Head of caudate nucleus (tissue), 42 donors: ENCODE measurements at regions of chr16 and their contacts with region 1.

Region 1: DNA sequence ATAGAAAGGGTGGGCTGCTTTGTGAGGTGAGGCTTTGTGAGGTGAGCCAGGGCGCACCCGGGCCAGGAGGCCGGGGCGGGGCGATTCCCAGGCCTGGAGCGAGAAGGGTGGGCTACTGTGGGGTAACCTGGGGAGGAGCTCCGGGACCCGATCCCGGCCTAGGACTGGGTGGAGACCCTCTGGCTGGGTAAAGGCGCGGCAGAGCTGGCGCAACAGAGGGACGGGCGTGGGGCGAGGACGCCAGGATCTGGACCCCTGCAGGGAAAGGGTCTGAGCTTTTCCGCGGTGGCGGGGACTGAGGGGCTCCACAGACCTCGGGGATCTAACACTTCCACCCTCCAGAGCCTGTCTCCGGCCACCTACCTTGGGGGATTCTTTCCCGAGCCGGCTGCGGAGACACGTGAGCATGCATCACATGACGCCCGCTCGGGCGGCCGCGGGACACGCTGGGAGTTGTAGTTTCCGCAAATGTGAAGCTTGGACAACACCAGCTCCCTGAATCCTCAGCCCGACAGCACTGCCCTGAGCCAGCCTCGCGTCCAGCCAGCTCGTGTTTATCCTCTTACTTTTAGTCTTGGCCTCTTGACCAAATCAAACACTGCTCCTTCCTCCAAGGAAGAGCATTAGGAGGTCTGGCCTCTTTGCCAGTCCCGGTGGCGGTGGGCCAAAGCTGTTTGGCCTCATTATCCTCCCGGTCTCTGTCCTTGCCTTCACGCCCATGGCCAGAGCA is at the start of gene SLC38A7:
- DNase-seq: peak; percentile 88 to 97 (median 93)

Region 2: DNA sequence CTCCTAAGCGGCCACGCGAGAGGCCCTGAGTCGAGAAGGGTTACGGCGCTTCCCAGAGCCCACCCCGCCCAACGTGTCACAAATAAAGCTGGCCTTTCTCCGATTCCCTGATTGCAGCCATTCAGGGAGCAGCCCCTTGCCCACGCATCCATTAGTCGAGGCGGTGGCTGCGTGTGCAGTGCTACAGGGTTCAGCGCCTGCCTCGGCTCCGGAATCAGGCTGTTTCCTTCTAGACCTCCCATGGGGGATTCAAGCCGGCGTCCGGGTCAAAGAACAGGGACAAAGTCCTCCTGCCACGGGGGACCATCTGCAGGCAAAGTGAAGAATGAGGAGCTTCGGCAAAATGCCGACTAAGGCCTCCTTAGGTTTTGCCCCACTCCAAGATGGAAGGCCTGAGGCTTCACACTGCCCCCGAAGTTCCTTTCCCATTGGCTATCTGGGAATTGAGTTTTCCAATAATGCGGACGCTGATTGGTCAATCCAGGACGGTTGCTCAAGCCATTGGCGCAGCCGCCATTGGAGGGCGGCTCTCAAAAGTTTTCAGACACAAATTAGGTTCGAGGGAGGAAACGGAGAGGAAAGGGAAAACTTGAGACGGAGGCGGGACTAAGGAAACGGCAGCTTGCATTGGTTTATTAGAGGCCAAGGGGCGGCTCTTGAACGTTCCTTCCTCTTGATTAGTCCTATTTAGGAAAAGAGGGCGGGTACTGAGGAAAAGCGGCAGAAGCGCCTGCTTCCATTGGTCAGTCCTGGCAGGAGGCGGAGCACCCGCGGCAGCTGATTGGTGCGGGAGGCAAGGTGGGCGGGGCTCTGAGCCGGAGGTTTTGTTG is 949.4 kb before region 1 on chr16:
- intact Hi-C with region 1: no loop called
- DNase-seq: peak; percentile 95 to 100 (median 99)

Region 3: DNA sequence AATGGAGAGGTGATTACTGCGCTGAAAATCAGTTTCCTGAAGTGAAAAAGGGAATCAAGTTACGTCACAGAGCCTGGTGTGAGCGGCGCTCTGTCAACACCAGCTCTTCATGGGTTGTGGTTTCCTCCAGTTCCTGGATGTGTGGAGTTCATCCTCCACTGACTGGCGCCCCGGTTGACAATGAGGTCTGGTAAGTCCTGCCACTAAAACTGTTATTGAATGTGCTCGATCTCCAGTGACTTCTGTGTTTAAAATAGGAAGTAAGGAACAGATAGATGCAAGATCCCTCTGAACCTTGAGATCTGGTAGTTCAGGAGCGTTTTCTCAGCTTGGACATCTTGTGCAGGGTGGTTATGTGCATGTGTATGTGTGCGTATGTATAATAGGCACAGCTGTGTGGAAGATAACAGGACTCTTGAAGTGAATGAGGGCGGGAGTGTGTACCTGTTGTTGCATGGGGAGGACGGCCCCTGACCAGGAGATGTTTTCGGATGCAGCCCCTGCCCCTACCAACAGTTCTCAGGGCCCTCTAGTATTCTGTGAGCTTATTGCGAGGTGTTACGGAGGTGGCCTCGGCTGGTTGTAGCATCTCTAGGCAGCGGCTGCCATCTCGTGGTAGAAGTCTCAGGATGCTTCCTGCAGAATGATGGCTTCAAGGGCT is 71.6 kb after region 1 on chr16:
- intact Hi-C with region 1: loop called (anchors 5 kb)
- DNase-seq: peak; percentile 62 to 92 (median 82)